Activated T-helper 2 cell treated with anti-CD3 and anti-CD28 coated beads, Interferon-gamma antibody, Interleukin-2, Interleukin-4, amounts not matched to agents 10 μg/mL and 5 μg/mL and 100 μg/mL, durations not matched to agents 14 hours and 24 hours and 36 hours (primary cell): ENCODE measurements at regions of chr1 and their contacts with region 1.

Region 1: GRCh38 chr1:2044510-2045319 is 5.5 kb upstream of the PRKCZ start:
- DNase-seq: peak; percentile 61
- H3K4me3 Mint-ChIP-seq: no peak overlapping the region
- H3K27ac Mint-ChIP-seq: no peak overlapping the region
- H3K4me1 Mint-ChIP-seq: peaks cover 10% of the 10 kb centered on the region
- H3K27me3 Mint-ChIP-seq: peaks cover 29% of the 10 kb centered on the region

Region 2: GRCh38 chr1:1943834-1944570 is 100.7 kb before region 1 on chr1:
- intact Hi-C with region 1: loop called (anchors 5 kb)
- DNase-seq: no peak
- H3K4me3 Mint-ChIP-seq: no peak overlapping the region
- H3K27ac Mint-ChIP-seq: no peak overlapping the region
- H3K4me1 Mint-ChIP-seq: peaks cover 2% of the 10 kb centered on the region
- H3K27me3 Mint-ChIP-seq: no peaks in the 10 kb centered on the region

Region 3: GRCh38 chr1:1959840-1960479 is 84.8 kb before region 1 on chr1:
- intact Hi-C with region 1: loop called (anchors 2 kb)
- DNase-seq: peak; percentile 56
- H3K4me3 Mint-ChIP-seq: no peak overlapping the region
- H3K27ac Mint-ChIP-seq: no peak overlapping the region
- H3K4me1 Mint-ChIP-seq: no peaks in the 10 kb centered on the region
- H3K27me3 Mint-ChIP-seq: peaks cover 4% of the 10 kb centered on the region

Region 4: DNA sequence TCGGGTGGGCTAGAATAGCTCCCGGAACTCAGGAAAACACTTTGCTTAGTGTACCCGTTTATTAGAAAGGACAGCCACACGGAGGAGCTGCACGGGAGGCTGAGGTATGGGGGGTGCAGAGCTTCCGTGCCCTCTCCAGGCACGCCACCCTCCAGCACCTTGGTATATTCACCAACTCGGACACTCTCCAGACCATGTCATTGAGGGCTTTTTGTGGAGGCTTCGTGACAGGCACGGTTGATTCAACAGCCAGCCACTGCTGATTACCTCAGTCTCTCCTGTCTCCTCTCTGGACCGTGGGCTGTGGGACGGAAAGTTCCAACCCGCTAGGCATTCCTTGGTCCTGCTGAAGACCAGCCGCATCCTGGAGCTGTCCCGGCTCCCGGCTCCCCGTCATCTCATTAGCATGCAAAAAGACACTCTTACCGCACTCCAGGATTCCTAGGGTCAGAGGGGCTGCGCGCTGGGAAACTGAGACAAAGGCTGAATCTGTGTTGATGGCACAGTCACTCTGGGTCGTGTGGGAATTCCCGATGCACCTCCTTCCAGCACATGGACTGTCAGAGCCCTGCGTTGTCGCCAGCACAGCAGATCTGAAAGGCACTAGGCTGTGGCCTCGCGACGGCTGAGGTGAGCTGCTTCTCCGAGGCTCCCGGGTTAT is 71.1 kb after region 1 on chr1:
- intact Hi-C with region 1: no loop called
- DNase-seq: no peak
- H3K4me3 Mint-ChIP-seq: no peak overlapping the region
- H3K27ac Mint-ChIP-seq: no peak overlapping the region
- H3K4me1 Mint-ChIP-seq: no peaks in the 10 kb centered on the region
- H3K27me3 Mint-ChIP-seq: no peaks in the 10 kb centered on the region